Sigmoid colon (tissue), 7 donors: ENCODE measurements at regions of chr17 and their contacts with region 1.

Region 1: GRCh38 chr17:63827002-63827771 is at the starts of genes FTSJ3 and PSMC5:
- DNase-seq: peak; percentile 98
- H3K4me3 ChIP-seq: peak within 1 kb of the TSS; percentile 51 to 86 (median 68)
- H3K27ac ChIP-seq: peak within 1 kb of the TSS; percentile 82 to 92 (median 89)
- H3K4me1 ChIP-seq: peaks cover 0 to 33% (median 28%) of the 10 kb centered on the region in 4 donors
- H3K27me3 ChIP-seq: no peaks in the 10 kb centered on the region
- CTCF ChIP-seq: peak; percentile 30 to 62 (median 44)
- EP300 ChIP-seq: no peak
- POLR2A ChIP-seq: peak; percentile 88 to 91
- total RNA-seq, gene FTSJ3: 31.0 to 65.8 (median 47.6) TPM
- total RNA-seq, gene PSMC5: 94.2 to 161 (median 113) TPM

Region 2: GRCh38 chr17:63621766-63622519 is 205.2 kb before region 1 on chr17 and contains the start of gene MAP3K3:
- intact Hi-C with region 1: loop called (anchors 5 kb)
- DNase-seq: peak; percentile 100
- H3K4me3 ChIP-seq: peak within 1 kb of the TSS; percentile 77 to 90 (median 82)
- H3K27ac ChIP-seq: peak within 1 kb of the TSS; percentile 87 to 93 (median 91)
- H3K4me1 ChIP-seq: peaks cover 0 to 43% (median 41%) of the 10 kb centered on the region in 4 donors
- H3K27me3 ChIP-seq: no peaks in the 10 kb centered on the region
- CTCF ChIP-seq: peak in 2 of 4 experiments; percentile 5 to 17
- EP300 ChIP-seq: no peak
- POLR2A ChIP-seq: peak; percentile 52 to 72
- total RNA-seq, gene MAP3K3: 51.5 to 68.7 (median 59.8) TPM

Region 3: GRCh38 chr17:63773381-63774140 is 53.6 kb before region 1 on chr17 and contains the start of gene CCDC47:
- intact Hi-C with region 1: loop called (anchors 5 kb)
- DNase-seq: peak; percentile 100
- H3K4me3 ChIP-seq: peak within 1 kb of the TSS; percentile 80 to 98 (median 92)
- H3K27ac ChIP-seq: peak within 1 kb of the TSS; percentile 97 to 99 (median 98)
- H3K4me1 ChIP-seq: peaks cover 0 to 52% (median 42%) of the 10 kb centered on the region in 4 donors
- H3K27me3 ChIP-seq: no peaks in the 10 kb centered on the region
- CTCF ChIP-seq: no peak
- EP300 ChIP-seq: peak in 1 of 4 donors; percentile 91
- POLR2A ChIP-seq: peak; percentile 94 to 96
- total RNA-seq, gene CCDC47: 35.7 to 47.1 (median 43.5) TPM

Region 4: GRCh38 chr17:63842540-63843386 is 15.6 kb after region 1 on chr17 and contains the start of gene SMARCD2:
- intact Hi-C with region 1: loop called (anchors 1 kb)
- DNase-seq: peak; percentile 99
- H3K4me3 ChIP-seq: peak within 1 kb of the TSS; percentile 71 to 95 (median 91)
- H3K27ac ChIP-seq: peak within 1 kb of the TSS; percentile 93 to 99 (median 96)
- H3K4me1 ChIP-seq: peaks cover 3 to 71% (median 57%) of the 10 kb centered on the region in 4 donors
- H3K27me3 ChIP-seq: no peaks in the 10 kb centered on the region
- CTCF ChIP-seq: no peak
- EP300 ChIP-seq: peak in 2 of 4 donors; percentile 48 to 58
- POLR2A ChIP-seq: peak; percentile 33 to 44
- total RNA-seq, gene SMARCD2: 79.7 to 122 (median 105) TPM

Region 5: GRCh38 chr17:64506576-64507477 is 679.6 kb after region 1 on chr17 and contains the start of gene CEP95:
- intact Hi-C with region 1: loop called (anchors 5 kb)
- DNase-seq: peak; percentile 99
- H3K4me3 ChIP-seq: peak within 1 kb of the TSS; percentile 78 to 90 (median 80)
- H3K27ac ChIP-seq: peak within 1 kb of the TSS; percentile 95 to 100 (median 98)
- H3K4me1 ChIP-seq: peaks cover 0 to 53% (median 48%) of the 10 kb centered on the region in 4 donors
- H3K27me3 ChIP-seq: no peaks in the 10 kb centered on the region
- CTCF ChIP-seq: no peak
- EP300 ChIP-seq: peak in 2 of 4 donors; percentile 13 to 34
- POLR2A ChIP-seq: peak; percentile 88 to 89
- total RNA-seq, gene CEP95: 34.9 to 74.5 (median 56.9) TPM